Activated CD8-positive, alpha-beta T cell treated with anti-CD3 and anti-CD28 coated beads for 36 hours (primary cell): ENCODE measurements at regions of chr15 and their contacts with region 1.

Region 1: GRCh38 chr15:60787837-60788691 is 309.1 kb upstream of the ICE2 start:
- DNase-seq: peak; percentile 60
- ATAC-seq: peak; percentile 87
- H3K4me3 Mint-ChIP-seq: peak overlapping the region; percentile 29
- H3K27ac Mint-ChIP-seq: peak overlapping the region; percentile 77
- H3K4me1 Mint-ChIP-seq: peaks cover 15% of the 10 kb centered on the region
- H3K27me3 Mint-ChIP-seq: no peaks in the 10 kb centered on the region
- CTCF ChIP-seq: peak; percentile 75

Region 2: DNA sequence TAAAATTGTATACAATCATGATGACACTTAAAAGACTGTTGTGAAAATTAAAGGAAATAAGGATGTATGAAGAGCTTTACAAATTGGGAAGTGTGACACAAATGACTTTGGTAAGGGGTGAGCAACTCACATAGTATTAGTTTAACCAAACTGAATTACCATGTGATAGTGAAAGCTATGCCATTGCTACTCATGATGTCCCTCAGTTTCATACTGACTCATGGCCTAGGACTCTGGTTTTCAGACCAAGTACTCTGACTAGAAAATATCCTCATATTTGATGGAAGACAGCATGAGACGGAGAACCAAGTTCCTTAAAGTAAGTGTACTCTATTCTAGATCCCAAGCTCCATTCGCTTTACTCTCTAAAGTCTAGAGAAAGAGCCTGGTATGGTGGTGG is 105.9 kb before region 1 on chr15:
- CTCF ChIA-PET with region 1: no interaction called
- POLR2A ChIA-PET with region 1: no interaction called
- intact Hi-C with region 1: no loop called
- DNase-seq: no peak
- ATAC-seq: peak; percentile 53
- H3K4me3 Mint-ChIP-seq: no peak overlapping the region
- H3K27ac Mint-ChIP-seq: no peak overlapping the region
- H3K4me1 Mint-ChIP-seq: peaks cover 3% of the 10 kb centered on the region
- H3K27me3 Mint-ChIP-seq: no peaks in the 10 kb centered on the region
- CTCF ChIP-seq: no peak

Region 3: GRCh38 chr15:60772395-60773120 is 15.5 kb before region 1 on chr15:
- CTCF ChIA-PET with region 1: interaction called, 24 read pairs
- POLR2A ChIA-PET with region 1: interaction called, 5 read pairs
- intact Hi-C with region 1: no loop called
- DNase-seq: no peak
- ATAC-seq: no peak
- H3K4me3 Mint-ChIP-seq: no peak overlapping the region
- H3K27ac Mint-ChIP-seq: no peak overlapping the region
- H3K4me1 Mint-ChIP-seq: peaks cover 17% of the 10 kb centered on the region
- H3K27me3 Mint-ChIP-seq: no peaks in the 10 kb centered on the region
- CTCF ChIP-seq: no peak

Region 4: DNA sequence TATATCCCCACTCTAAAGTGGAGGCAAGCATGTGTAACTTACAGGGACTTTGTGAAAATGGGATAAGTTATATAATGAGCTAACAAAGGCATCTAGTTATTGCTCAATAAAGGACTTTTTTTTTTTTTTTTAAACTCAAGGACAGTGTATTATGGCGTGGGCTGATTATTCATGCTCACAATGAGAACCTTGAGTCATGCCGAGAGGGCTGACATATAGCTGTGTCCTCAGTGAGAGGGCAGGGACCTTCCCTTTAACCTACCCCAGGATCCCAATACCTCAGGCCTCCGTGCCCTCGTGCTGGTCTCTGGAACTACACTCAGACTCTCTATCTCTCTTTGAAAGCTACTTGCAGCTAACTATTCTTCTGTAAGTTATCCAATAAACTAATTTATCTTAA is 10.8 kb after region 1 on chr15:
- CTCF ChIA-PET with region 1: interaction called, 31 read pairs
- POLR2A ChIA-PET with region 1: interaction called, 5 read pairs
- intact Hi-C with region 1: no loop called
- DNase-seq: peak; percentile 78
- ATAC-seq: peak; percentile 81
- H3K4me3 Mint-ChIP-seq: no peak overlapping the region
- H3K27ac Mint-ChIP-seq: peak overlapping the region; percentile 78
- H3K4me1 Mint-ChIP-seq: peaks cover 76% of the 10 kb centered on the region
- H3K27me3 Mint-ChIP-seq: no peaks in the 10 kb centered on the region
- CTCF ChIP-seq: no peak